Heart left ventricle (tissue), 16 donors: ENCODE measurements at regions of chr22 and their contacts with region 1.

Region 1: DNA sequence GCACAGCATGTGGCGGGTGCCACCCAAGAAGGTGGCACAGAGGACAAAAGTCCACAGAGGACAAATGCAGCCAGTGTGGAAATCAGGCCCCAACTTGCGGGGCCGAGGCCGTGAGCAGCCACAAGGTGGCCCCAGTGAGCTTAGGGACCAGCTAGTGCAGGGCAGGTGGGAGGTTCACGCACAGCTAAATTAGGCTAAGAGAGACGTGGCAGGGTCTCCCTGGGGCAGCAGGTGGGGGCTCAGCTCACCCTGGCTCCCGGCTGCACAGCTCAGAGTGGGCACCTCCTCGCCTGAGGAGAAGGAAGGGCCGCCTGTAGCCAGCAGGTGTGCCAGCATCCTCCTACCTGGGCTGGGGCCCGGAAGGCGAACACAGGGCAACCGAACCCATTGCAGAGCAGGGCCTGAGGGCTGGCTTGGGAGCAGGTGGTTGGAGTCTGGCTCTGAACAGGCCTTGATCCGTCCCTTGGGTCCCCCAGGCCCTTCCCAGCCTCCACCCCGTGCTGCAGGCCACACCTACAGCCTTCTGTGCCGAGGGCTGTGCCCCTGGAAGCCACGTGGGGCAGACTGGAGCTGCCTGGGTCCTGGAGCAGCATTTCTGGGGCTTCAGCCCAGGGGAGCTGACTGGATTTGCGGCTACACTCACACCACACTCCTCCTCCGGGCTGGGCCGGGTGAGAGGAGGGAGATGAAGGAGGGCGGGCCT is 26.1 kb upstream of the CELSR1 start:
- DNase-seq: peak; percentile 76 to 90 (median 83)
- ATAC-seq: peak; percentile 90 to 94 (median 92)
- H3K4me3 ChIP-seq: no peak overlapping the region
- H3K27ac ChIP-seq: peak overlapping the region in 9 of 12 donors; percentile 11 to 84 (median 57)
- H3K4me1 ChIP-seq: peaks cover 7 to 21% (median 12%) of the 10 kb centered on the region in 12 donors
- H3K27me3 ChIP-seq: no peaks in the 10 kb centered on the region
- CTCF ChIP-seq: peak; percentile 68 to 85 (median 78)
- POLR2A ChIP-seq: no peak

Region 2: DNA sequence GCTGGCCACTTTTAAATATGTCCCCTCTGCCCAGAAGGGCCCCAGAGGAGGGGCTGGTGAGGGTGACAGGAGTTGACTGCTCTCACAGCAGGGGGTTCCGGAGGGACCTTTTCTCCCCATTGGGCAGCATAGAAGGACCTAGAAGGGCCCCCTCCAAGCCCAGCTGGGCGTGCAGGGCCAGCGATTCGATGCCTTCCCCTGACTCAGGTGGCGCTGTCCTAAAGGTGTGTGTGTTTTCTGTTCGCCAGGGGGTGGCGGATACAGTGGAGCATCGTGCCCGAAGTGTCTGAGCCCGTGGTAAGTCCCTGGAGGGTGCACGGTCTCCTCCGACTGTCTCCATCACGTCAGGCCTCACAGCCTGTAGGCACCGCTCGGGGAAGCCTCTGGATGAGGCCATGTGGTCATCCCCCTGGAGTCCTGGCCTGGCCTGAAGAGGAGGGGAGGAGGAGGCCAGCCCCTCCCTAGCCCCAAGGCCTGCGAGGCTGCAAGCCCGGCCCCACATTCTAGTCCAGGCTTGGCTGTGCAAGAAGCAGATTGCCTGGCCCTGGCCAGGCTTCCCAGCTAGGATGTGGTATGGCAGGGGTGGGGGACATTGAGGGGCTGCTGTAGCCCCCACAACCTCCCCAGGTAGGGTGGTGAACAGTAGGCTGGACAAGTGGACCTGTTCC is 103.2 kb after region 1 on chr22:
- intact Hi-C with region 1: loop called in 4 of 10 experiments (anchors 2 to 5 kb)
- DNase-seq: peak in 1 of 5 donors; percentile 13
- ATAC-seq: no peak
- H3K4me3 ChIP-seq: no peak overlapping the region
- H3K27ac ChIP-seq: no peak overlapping the region
- H3K4me1 ChIP-seq: peaks cover 0 to 23% (median 5%) of the 10 kb centered on the region in 12 donors
- H3K27me3 ChIP-seq: no peaks in the 10 kb centered on the region
- CTCF ChIP-seq: no peak
- POLR2A ChIP-seq: no peak

Region 3: GRCh38 chr22:46674367-46674781 is 110.8 kb after region 1 on chr22:
- intact Hi-C with region 1: loop called in 5 of 10 experiments (anchors 2 to 5 kb)
- DNase-seq: peak; percentile 73 to 87 (median 84)
- ATAC-seq: peak; percentile 13 to 84 (median 34)
- H3K4me3 ChIP-seq: peak overlapping the region in 10 of 12 donors; percentile 22 to 61 (median 44)
- H3K27ac ChIP-seq: peak overlapping the region; percentile 15 to 86 (median 69)
- H3K4me1 ChIP-seq: peaks cover 0 to 47% (median 16%) of the 10 kb centered on the region in 12 donors
- H3K27me3 ChIP-seq: no peaks in the 10 kb centered on the region
- CTCF ChIP-seq: no peak
- POLR2A ChIP-seq: no peak

Region 4: GRCh38 chr22:46684706-46685105 is 121.2 kb after region 1 on chr22:
- intact Hi-C with region 1: loop called in 3 of 10 experiments (anchors 5 kb)
- DNase-seq: peak in 4 of 5 donors; percentile 57 to 76 (median 68)
- ATAC-seq: peak; percentile 59 to 65 (median 60)
- H3K4me3 ChIP-seq: no peak overlapping the region
- H3K27ac ChIP-seq: peak overlapping the region; percentile 75 to 93 (median 84)
- H3K4me1 ChIP-seq: peaks cover 11 to 67% (median 54%) of the 10 kb centered on the region in 12 donors
- H3K27me3 ChIP-seq: no peaks in the 10 kb centered on the region
- CTCF ChIP-seq: no peak
- POLR2A ChIP-seq: no peak

Region 5: DNA sequence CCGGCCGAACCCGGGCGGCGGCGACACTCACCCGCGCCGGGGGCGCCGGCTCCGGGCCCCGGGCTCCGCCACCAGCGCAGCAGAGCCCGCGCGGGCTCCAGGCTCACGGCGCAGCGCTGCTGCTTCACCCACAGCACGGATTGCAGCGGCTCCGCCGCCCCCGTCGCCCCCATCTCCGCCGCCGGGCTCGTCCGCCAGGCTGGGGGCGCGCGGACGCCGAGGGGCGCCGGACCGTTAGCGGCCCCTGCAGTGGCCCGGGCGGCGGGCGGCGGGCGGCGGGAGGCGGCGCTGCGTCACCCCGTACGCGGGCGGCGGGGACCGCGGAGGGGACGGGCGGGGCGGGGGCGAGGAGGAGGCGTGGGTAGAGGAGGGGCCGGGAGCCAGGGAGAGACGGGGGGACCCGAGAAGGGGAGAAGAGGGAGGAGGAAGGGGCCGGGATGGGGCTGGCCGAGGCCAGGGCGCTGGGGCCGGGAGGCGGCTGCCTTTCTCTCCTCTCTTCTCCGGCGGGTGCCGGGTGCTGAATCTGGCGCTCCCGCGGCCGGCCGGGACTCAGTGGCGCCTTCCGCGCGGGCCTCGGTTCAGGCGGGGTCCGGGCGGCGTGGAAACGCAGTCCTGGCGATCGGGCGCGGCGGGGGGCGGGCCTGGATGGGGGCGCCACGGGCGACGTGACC is 174.6 kb after region 1 on chr22 and contains the start of gene CERK:
- intact Hi-C with region 1: loop called in 5 of 10 experiments (anchors 5 kb)
- DNase-seq: peak; percentile 86 to 94 (median 90)
- ATAC-seq: peak; percentile 52 to 77 (median 70)
- H3K4me3 ChIP-seq: peak within 1 kb of the TSS; percentile 57 to 100 (median 92)
- H3K27ac ChIP-seq: peak within 1 kb of the TSS; percentile 90 to 100 (median 98)
- H3K4me1 ChIP-seq: peaks cover 9 to 87% (median 56%) of the 10 kb centered on the region in 12 donors
- H3K27me3 ChIP-seq: no peaks in the 10 kb centered on the region
- CTCF ChIP-seq: no peak
- POLR2A ChIP-seq: peak in 1 of 2 donors; percentile 87
- total RNA-seq, gene CERK: 52.6 to 125 (median 72.3) TPM

Region 6: DNA sequence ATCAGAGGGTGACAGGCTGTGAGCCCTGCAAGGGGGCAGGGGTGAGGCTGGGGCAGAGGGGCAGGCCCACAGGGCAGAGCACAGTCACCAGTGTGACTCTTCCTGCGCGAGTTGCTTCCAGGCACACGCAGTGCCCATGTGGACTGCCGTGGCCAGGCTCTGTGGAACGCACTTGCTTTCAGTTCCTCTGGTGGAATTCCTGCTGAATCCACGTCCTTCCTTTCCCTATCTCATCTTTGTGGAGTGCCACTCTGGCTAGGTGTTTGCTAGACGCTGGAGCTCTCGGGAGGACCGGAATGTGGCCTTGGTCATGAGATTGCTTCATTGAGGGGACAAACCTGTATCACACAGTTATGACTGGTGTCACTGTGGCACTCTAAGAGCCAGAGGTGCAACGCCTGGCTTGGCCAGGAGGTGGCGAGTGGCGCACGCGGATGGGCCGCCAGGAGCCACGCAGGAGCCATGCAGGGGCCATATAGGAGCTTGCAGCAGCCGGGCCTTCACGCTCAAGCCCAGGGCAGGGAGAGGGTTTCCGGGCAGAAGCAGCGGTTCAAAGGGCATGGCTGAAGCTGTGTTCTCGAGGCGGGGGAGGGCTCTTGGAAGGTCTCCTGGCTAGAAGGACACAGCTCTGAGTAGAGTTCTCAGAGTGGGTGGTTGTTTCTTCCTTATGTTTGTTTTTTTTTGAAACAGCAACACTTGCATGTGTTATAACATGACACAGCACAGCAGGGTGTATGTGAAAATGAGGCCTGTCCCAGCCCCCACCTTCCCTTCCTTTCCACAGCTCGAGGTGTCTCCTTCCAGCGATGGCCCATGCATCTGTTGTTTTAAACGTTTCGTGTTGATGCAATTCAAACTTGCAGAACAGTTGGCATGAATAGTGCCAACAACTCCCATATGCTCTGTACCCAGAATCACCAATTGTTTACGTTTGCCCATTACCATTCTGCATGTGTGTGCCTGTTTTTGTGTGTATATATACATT is 235.1 kb after region 1 on chr22:
- intact Hi-C with region 1: loop called in 4 of 10 experiments (anchors 5 kb)
- DNase-seq: peak; percentile 56 to 86 (median 71)
- ATAC-seq: peak; percentile 35 to 86 (median 84)
- H3K4me3 ChIP-seq: no peak overlapping the region
- H3K27ac ChIP-seq: peak overlapping the region in 1 of 12 donors; percentile 27
- H3K4me1 ChIP-seq: peaks cover 0 to 17% (median 11%) of the 10 kb centered on the region in 12 donors
- H3K27me3 ChIP-seq: no peaks in the 10 kb centered on the region
- CTCF ChIP-seq: peak; percentile 85 to 94 (median 92)
- POLR2A ChIP-seq: no peak